PC-9 (cell line): ENCODE measurements at regions of chr4 and their contacts with region 1.

Region 1: DNA sequence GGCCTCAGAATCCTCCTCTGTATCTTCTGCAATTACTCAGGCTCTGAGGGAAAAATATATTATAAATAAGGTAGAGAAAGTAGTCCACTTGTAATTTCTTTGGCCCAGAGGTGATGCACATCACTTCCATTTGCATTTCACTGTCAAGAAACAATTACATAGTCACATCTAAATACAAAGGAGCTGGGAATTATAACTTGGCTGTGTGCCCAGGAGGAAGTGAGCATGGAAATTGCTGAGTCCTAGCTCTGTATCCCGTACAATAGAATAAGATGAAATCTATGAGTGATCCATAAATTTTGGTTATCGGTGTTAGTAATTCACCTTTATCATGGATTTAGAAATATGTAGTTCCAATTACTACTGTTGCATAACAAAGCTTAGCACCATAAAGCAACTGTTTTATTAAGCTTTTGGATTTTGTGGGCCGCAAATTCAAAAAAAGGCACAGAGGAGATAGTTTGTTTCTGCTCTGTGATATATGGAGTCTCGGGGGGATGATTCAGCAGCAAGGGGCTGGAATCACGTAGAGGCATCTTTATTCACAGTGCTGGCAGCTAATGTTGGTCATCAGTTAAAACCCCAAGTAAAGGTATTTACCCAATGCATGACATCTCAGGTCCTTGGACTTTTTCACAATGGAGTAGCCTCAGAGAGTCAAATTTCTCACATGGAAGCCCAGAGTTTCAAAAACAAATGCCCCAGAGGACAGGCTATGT is 241.4 kb upstream of the GALNT7 start:
- DNase-seq: no peak
- H3K4me3 ChIP-seq: no peak overlapping the region
- H3K27ac ChIP-seq: no peak overlapping the region
- H3K4me1 ChIP-seq: no peaks in the 10 kb centered on the region
- H3K27me3 ChIP-seq: no peaks in the 10 kb centered on the region
- CTCF ChIP-seq: no peak

Region 2: DNA sequence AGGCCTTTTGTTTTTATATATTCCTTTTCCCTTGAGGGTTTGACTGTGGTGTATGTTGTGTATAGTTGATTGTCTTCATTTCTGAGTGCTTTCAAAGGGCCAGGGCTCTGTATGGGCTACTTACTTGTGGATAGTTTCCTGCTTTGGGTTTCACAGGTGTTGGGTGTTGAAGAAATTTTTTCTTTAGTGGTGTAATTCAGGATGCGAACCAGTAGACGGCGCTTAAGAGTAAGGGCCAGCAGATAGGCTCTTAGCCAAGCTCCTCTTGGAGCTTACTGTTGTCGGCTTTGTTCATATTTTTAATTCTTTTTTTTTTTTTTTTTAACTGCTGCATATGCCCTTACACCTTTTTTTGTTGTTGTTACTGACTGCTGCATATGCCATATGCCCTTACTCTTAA is 35.0 kb before region 1 on chr4:
- CTCF ChIA-PET with region 1: no interaction called
- POLR2A ChIA-PET with region 1: no interaction called
- intact Hi-C with region 1: loop called (anchors 2 kb)
- DNase-seq: no peak
- H3K4me3 ChIP-seq: no peak overlapping the region
- H3K27ac ChIP-seq: no peak overlapping the region
- H3K4me1 ChIP-seq: no peaks in the 10 kb centered on the region
- H3K27me3 ChIP-seq: no peaks in the 10 kb centered on the region
- CTCF ChIP-seq: peak; percentile 66